ENCODE measurements at regions of chr16 and their contacts with region 1.

Region 1: GRCh38 chr16:87278191-87279095 is 38.7 kb downstream of the C16orf95 start:
- DNase-seq: peak; percentile 59 to 78
- ATAC-seq: peak; percentile 97

Region 2: GRCh38 chr16:86575754-86576557 is 702.5 kb before region 1 on chr16:
- intact Hi-C with region 1: loop called in 1 of 2 experiments (anchors 10 kb)
- DNase-seq: peak; percentile 47 to 76
- ATAC-seq: peak; percentile 84

Region 3: GRCh38 chr16:87062569-87063442 is 215.6 kb before region 1 on chr16:
- intact Hi-C with region 1: loop called in 1 of 2 experiments (anchors 5 kb)
- DNase-seq: peak in 1 of 2 donors; percentile 73
- ATAC-seq: peak; percentile 74

Region 4: DNA sequence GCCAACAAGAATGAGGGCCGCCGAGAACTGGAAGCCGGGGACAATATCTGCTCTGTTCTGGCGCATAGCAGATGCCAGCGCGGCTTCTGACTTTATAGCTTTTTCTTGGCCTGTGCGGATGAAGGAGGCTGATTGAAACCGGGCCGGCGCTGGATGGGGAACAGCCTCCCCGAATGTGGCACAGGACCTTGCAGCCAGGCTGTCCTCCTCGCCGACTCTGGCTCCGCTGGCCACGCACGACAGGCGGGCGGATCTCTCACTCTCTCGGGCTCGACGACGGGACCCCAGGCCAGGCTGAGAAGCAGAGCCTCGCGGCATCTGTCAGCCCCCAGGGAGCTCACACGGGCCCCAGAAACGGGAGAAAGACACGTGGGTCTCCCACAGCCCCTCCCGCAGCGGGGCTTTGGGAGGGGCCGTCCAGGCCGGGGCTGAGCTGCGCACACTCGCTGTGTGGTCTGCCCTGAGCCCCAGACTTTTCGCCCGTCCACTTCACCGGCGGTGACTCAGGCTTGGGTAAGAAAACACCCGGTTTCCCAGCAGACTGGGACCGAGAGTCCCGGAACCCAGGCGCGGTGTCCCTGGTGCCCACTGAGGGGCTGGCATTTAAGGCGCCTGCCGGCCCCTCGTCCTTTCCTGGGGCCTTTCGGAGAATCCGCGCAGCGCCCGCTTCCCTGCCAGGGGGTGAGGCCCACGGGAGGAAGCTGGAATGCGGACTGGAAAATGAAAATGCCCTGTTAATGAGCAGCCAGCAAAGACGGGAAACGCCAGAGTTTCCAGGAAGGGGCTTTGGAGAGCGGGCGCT is 61.8 kb before region 1 on chr16:
- intact Hi-C with region 1: loop called in 1 of 2 experiments (anchors 10 kb)
- DNase-seq: no peak
- ATAC-seq: no peak

Measured in left colon (tissue), 2 donors.